ENCODE measurements at regions of chr1 and their contacts with region 1.

Region 1: GRCh38 chr1:246856371-246856770 is 75.4 kb downstream of the AHCTF1 start:
- DNase-seq: no peak
- H3K4me3 ChIP-seq: no peak overlapping the region
- H3K27ac ChIP-seq: no peak overlapping the region
- H3K4me1 ChIP-seq: no peaks in the 10 kb centered on the region
- H3K27me3 ChIP-seq: no peaks in the 10 kb centered on the region
- CTCF ChIP-seq: no peak
- POLR2A ChIP-seq: no peak

Region 2: DNA sequence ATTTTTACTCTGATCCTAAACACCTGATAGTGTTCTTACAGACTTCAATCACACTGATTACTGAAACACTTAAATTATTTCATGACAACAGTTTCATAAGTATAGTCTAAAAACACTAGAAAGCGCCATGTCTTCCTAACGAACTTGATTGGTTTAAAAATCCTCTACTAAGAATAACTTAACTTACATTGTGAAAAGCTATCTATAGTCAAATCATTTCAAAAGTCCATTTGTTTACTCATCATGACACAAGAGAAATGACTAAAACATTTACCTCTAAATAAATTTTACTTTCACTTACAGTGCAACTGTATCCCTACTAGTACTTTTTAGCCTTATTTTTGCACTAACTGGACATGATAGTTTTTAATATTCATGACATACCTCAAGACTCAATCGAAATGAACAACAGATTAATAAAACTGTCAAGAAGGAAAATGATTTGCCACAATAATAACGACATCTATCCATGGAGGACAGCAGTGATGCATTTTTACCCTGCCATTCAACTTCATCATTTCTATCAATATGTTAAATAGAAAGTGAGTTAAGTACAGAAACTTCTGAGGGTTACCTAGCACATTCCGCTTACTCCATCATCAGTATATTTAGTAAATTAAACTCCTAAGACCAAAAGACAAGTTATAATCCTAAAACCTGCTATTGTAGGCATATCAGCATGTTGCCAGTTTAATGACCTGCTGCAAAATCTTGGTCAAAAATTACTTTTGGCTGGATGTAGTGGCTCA is 37.0 kb after region 1 on chr1:
- intact Hi-C with region 1: loop called (anchors 5 kb)
- DNase-seq: no peak
- H3K4me3 ChIP-seq: no peak overlapping the region
- H3K27ac ChIP-seq: no peak overlapping the region
- H3K4me1 ChIP-seq: no peaks in the 10 kb centered on the region
- H3K27me3 ChIP-seq: no peaks in the 10 kb centered on the region
- CTCF ChIP-seq: no peak
- POLR2A ChIP-seq: no peak

Region 3: DNA sequence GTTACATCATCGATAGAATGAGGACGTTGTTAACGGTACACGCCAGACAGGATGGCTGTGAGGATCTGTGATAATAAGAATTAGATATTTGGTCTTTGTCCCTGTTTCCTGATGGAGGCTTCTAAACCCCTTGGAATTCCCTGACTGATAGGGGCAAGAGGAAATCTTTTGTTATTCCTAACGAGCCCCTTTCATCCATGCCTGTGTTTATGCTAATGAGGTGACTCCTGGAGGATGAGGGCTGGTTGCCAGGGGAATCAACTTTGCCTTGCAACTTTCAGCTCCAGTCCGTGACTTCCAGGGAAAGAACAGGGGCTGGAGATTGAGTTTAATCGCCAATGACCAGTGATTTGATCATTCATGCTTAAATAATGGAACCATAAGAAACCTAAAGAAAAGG is 520.3 kb after region 1 on chr1:
- intact Hi-C with region 1: no loop called
- DNase-seq: no peak
- H3K4me3 ChIP-seq: no peak overlapping the region
- H3K27ac ChIP-seq: no peak overlapping the region
- H3K4me1 ChIP-seq: peaks cover 0 to 15% (median 8%) of the 10 kb centered on the region in 6 donors
- H3K27me3 ChIP-seq: peaks cover 0 to 9% (median 0%) of the 10 kb centered on the region in 7 donors
- CTCF ChIP-seq: no peak
- POLR2A ChIP-seq: no peak